ENCODE measurements at regions of chr16 and their contacts with region 1.

Region 1: DNA sequence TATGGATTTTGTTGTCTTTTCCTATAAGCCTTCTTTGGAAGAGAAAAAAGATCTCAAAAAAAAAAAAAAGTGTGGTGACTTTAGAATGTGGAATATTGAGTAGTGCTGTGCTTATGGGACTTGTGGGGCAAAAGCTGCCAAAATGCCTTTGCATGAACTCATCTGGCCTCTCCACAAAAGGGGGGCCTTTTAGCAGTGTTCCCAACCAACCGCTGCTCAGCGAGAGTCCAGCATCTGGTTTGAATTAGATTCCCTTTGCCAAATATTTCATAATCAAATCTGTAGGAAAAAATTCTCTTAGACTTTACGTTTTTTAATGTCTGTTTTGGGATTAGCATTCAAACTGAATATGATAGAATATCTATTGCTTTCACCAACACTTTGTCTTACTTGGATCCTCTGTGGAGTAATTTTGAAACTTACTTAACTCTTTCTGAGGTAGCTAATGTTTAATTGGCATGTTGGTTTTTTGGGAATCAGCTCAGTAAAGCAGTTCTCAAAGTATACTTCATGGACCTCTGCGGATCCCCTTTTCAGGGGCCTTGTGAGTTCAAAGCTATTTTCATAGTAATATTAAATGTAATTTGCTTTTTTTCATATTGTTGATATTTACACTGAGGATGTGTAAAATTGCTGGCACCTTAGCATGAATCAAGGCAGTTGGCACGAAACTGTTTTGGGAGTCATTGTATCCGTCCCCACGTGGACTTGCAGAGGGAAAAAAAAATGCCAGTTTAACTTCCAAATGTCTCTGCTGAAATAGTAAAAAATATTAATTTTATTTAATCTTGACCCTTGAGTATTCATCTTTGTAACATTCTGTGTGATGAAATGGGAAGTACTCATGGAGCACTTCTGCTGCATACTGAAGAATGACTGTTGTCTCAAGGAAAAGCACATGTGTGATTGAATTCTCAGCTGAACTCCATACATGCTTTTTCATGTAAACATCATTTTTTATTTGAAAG is 34.7 kb upstream of the VPS4A start:
- DNase-seq: no peak
- ATAC-seq: no peak
- H3K4me3 ChIP-seq: no peak overlapping the region
- H3K27ac ChIP-seq: no peak overlapping the region
- H3K4me1 ChIP-seq: no peaks in the 10 kb centered on the region
- H3K27me3 ChIP-seq: no peaks in the 10 kb centered on the region
- CTCF ChIP-seq: no peak
- POLR2A ChIP-seq: no peak
- RAD21 ChIP-seq: no peak

Region 2: DNA sequence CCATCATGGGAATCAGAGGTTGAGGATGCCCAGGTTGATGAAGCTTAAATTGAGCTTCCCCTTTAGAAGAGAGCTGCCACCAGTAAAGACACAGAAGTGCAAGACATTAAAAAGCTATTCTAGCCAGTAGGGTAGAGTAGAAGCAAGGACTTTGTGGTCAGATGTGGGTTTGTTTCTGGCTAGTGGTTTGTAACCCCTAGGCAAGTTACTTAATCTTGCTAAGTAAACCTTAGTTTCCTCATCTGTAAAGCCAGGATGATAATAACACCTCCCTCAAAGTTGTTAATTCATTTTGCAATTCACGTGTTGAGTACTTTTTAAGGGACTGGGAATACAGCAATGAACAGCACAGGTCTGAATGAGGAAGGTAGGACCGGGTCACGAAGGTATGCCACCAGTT is 85.8 kb before region 1 on chr16:
- CTCF ChIA-PET with region 1: no interaction called
- POLR2A ChIA-PET with region 1: no interaction called
- RAD21 ChIA-PET with region 1: interaction called in 1 of 2 experiments, 3 read pairs
- intact Hi-C with region 1: loop called (anchors 10 kb)
- DNase-seq: no peak
- ATAC-seq: no peak
- H3K4me3 ChIP-seq: no peak overlapping the region
- H3K27ac ChIP-seq: no peak overlapping the region
- H3K4me1 ChIP-seq: peaks cover 8 to 29% of the 10 kb centered on the region in 2 experiments
- H3K27me3 ChIP-seq: no peaks in the 10 kb centered on the region
- CTCF ChIP-seq: no peak
- POLR2A ChIP-seq: no peak
- RAD21 ChIP-seq: no peak

Measured in HCT116 (cell line).